ENCODE measurements at regions of chr6 and their contacts with region 1.

Region 1: GRCh38 chr6:2988426-2989331 is 11.0 kb upstream of the NQO2 start:
- DNase-seq: peak; percentile 73 to 89 (median 76)
- H3K4me3 ChIP-seq: peak overlapping the region; percentile 80 to 100 (median 96)
- H3K4me3 Mint-ChIP-seq: peak overlapping the region; percentile 89 to 98
- H3K27ac ChIP-seq: peak overlapping the region; percentile 82 to 94
- H3K27ac Mint-ChIP-seq: peak overlapping the region; percentile 97 to 99 (median 97)
- H3K4me1 ChIP-seq: peaks cover 19 to 32% of the 10 kb centered on the region in 2 donors
- H3K4me1 Mint-ChIP-seq: peaks cover 26% of the 10 kb centered on the region
- H3K27me3 ChIP-seq: no peaks in the 10 kb centered on the region
- H3K27me3 Mint-ChIP-seq: peaks cover 2 to 7% (median 2%) of the 10 kb centered on the region in 3 donors
- CTCF ChIP-seq: peak; percentile 93

Region 2: DNA sequence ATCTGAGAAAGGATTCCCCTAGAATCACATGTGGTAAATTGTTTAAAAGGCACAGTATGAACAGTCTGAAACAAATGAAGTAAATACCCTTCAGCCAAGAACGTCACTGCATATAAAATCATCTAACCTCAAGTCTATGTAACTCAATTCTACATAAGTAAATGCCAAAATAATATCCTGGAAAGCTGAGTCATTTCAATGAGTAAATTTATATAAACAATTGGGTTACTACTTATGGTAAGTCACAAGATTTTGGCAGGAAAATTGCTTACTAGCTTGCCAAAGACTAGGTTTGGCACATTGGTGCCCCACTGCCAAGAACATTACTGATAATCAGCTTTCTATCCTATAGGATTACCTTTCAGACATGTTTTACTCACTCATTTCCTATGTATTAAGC is 751.7 kb before region 1 on chr6:
- intact Hi-C with region 1: no loop called
- DNase-seq: no peak
- H3K4me3 ChIP-seq: no peak overlapping the region
- H3K4me3 Mint-ChIP-seq: no peak overlapping the region
- H3K27ac ChIP-seq: no peak overlapping the region
- H3K27ac Mint-ChIP-seq: no peak overlapping the region
- H3K4me1 ChIP-seq: no peaks in the 10 kb centered on the region
- H3K4me1 Mint-ChIP-seq: no peaks in the 10 kb centered on the region
- H3K27me3 ChIP-seq: no peaks in the 10 kb centered on the region
- H3K27me3 Mint-ChIP-seq: peaks cover 0 to 1% (median 0%) of the 10 kb centered on the region in 3 donors
- CTCF ChIP-seq: no peak

Region 3: DNA sequence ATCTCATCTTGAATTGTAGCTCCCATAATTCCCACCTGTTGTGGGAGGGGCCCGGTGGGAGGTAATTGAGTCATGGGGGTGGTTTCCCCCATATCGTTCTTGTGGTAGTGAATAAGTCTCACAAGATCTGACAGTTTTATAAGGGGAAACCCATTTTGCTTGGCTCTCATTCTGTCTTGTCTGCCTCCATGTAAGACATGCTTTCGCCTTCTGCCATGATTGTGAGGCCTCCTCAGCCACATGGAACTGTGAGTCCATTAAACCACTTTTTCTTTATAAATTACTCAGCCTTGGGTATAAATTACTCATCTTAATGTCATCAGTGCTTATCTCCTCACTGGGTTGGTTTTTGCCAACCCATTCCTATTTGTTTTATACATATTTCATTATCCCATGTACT is 601.2 kb before region 1 on chr6:
- intact Hi-C with region 1: no loop called
- DNase-seq: no peak
- H3K4me3 ChIP-seq: no peak overlapping the region
- H3K4me3 Mint-ChIP-seq: no peak overlapping the region
- H3K27ac ChIP-seq: no peak overlapping the region
- H3K27ac Mint-ChIP-seq: peak overlapping the region in 1 of 7 donors; percentile 19
- H3K4me1 ChIP-seq: no peaks in the 10 kb centered on the region
- H3K4me1 Mint-ChIP-seq: no peaks in the 10 kb centered on the region
- H3K27me3 ChIP-seq: no peaks in the 10 kb centered on the region
- H3K27me3 Mint-ChIP-seq: peaks cover 0 to 3% (median 0%) of the 10 kb centered on the region in 3 donors
- CTCF ChIP-seq: no peak

Region 4: DNA sequence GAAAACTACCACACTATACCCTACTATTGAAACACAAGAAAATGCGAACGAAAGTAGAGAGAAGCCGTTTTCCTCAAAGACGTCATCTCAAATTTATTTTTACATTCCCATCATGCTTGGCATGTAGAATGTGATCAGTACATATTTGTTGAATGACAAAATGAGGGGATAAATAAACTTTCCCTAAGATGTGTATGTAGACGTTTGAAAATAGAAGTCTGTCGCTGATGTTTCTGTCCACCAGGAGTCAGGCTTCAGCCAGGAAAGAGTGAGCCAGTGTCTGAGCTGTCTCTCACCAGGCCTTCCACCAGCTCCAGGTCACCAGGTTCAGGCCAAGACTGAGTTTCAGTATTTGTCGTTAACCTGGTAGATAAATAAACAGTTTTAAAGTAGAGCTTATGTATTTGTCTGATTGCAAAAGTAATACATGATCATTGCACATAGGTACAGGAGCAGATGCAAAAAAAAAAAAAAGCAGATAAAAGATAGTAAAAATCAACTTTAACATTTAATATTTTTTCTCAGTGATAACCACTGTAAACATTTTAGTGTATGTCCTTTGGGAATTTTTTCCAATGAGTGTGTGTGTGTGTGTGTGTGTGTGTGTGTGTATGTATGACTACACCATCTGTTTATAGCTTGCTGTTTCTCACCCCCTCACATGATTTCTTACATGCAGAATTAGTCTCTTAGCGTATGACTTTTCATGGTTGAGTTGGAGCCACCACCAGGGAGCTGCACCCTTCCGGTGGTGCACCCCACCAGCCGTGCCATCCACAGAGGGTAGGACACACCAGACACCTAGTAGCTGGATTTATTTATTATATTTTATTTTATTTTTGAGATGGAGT is 197.3 kb before region 1 on chr6:
- intact Hi-C with region 1: loop called in 1 of 2 experiments (anchors 2 kb)
- DNase-seq: peak; percentile 72 to 81 (median 79)
- H3K4me3 ChIP-seq: no peak overlapping the region
- H3K4me3 Mint-ChIP-seq: no peak overlapping the region
- H3K27ac ChIP-seq: peak overlapping the region; percentile 55 to 94
- H3K27ac Mint-ChIP-seq: peak overlapping the region; percentile 88 to 100 (median 99)
- H3K4me1 ChIP-seq: peaks cover 51 to 57% of the 10 kb centered on the region in 2 donors
- H3K4me1 Mint-ChIP-seq: peaks cover 51% of the 10 kb centered on the region
- H3K27me3 ChIP-seq: no peaks in the 10 kb centered on the region
- H3K27me3 Mint-ChIP-seq: peaks cover 0 to 4% (median 1%) of the 10 kb centered on the region in 3 donors
- CTCF ChIP-seq: peak; percentile 74

Region 5: GRCh38 chr6:2931970-2932748 is 56.5 kb before region 1 on chr6:
- intact Hi-C with region 1: loop called in 1 of 2 experiments (anchors 10 kb)
- DNase-seq: peak; percentile 74 to 88 (median 86)
- H3K4me3 ChIP-seq: peak overlapping the region in 1 of 3 experiments; percentile 50
- H3K4me3 Mint-ChIP-seq: peak overlapping the region; percentile 53 to 76
- H3K27ac ChIP-seq: no peak overlapping the region
- H3K27ac Mint-ChIP-seq: peak overlapping the region in 4 of 7 donors; percentile 45 to 62 (median 53)
- H3K4me1 ChIP-seq: peaks cover 9 to 10% of the 10 kb centered on the region in 2 donors
- H3K4me1 Mint-ChIP-seq: peaks cover 11% of the 10 kb centered on the region
- H3K27me3 ChIP-seq: no peaks in the 10 kb centered on the region
- H3K27me3 Mint-ChIP-seq: peaks cover 0 to 5% (median 1%) of the 10 kb centered on the region in 3 donors
- CTCF ChIP-seq: peak; percentile 94

Region 6: DNA sequence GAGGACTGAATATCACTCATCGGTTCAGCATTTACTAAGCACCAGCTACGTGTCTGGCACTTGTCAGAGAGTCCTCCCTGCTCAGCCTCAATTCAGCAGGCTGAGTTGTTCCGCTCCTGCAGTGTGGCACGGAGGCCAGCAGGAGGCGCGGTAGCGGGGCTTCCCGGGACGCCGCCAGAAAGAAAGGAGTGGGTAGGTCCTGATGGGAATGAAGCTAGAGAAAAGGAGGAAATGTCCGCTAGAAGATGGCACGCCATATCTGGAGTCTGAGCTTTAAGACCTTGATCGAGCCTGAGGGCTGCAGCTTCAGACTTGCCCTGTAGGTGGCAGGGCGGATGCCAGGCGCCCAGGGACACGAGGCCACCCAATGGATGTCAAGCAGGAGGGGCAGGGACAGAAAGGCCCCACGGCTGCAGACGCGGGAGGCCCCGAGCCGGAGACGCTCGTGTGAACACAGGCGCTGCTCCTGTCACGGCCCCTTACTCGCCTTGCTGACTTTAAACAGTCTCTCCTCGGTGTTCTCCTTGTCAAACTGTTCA is 36.1 kb before region 1 on chr6:
- intact Hi-C with region 1: loop called (anchors 2 to 5 kb)
- DNase-seq: peak; percentile 54 to 82 (median 74)
- H3K4me3 ChIP-seq: peak overlapping the region in 2 of 3 experiments; percentile 17 to 53
- H3K4me3 Mint-ChIP-seq: peak overlapping the region; percentile 76 to 79
- H3K27ac ChIP-seq: peak overlapping the region; percentile 34 to 87
- H3K27ac Mint-ChIP-seq: peak overlapping the region; percentile 96 to 98 (median 97)
- H3K4me1 ChIP-seq: peaks cover 15 to 22% of the 10 kb centered on the region in 2 donors
- H3K4me1 Mint-ChIP-seq: peaks cover 21% of the 10 kb centered on the region
- H3K27me3 ChIP-seq: no peaks in the 10 kb centered on the region
- H3K27me3 Mint-ChIP-seq: peaks cover 0 to 2% (median 2%) of the 10 kb centered on the region in 3 donors
- CTCF ChIP-seq: peak; percentile 100

Region 7: GRCh38 chr6:3258720-3259490 is 270.2 kb after region 1 on chr6 and contains the start of gene PSMG4:
- intact Hi-C with region 1: loop called (anchors 10 kb)
- DNase-seq: peak; percentile 79 to 90 (median 89)
- H3K4me3 ChIP-seq: peak within 1 kb of the TSS; percentile 71 to 91 (median 79)
- H3K4me3 Mint-ChIP-seq: peak within 1 kb of the TSS; percentile 99 to 100
- H3K27ac ChIP-seq: peak within 1 kb of the TSS; percentile 31 to 71
- H3K27ac Mint-ChIP-seq: peak within 1 kb of the TSS; percentile 74 to 93 (median 85)
- H3K4me1 ChIP-seq: peaks cover 19 to 23% of the 10 kb centered on the region in 2 donors
- H3K4me1 Mint-ChIP-seq: peaks cover 30% of the 10 kb centered on the region
- H3K27me3 ChIP-seq: peaks cover 0 to 18% of the 10 kb centered on the region in 2 donors
- H3K27me3 Mint-ChIP-seq: peaks cover 13 to 21% (median 18%) of the 10 kb centered on the region in 3 donors
- CTCF ChIP-seq: no peak
- polyA plus RNA-seq, gene PSMG4: 23.6 to 31.1 (median 27.9) TPM

Measured in CD14-positive monocyte (primary cell).